ENCODE measurements at regions of chr10 and their contacts with region 1.

Region 1: DNA sequence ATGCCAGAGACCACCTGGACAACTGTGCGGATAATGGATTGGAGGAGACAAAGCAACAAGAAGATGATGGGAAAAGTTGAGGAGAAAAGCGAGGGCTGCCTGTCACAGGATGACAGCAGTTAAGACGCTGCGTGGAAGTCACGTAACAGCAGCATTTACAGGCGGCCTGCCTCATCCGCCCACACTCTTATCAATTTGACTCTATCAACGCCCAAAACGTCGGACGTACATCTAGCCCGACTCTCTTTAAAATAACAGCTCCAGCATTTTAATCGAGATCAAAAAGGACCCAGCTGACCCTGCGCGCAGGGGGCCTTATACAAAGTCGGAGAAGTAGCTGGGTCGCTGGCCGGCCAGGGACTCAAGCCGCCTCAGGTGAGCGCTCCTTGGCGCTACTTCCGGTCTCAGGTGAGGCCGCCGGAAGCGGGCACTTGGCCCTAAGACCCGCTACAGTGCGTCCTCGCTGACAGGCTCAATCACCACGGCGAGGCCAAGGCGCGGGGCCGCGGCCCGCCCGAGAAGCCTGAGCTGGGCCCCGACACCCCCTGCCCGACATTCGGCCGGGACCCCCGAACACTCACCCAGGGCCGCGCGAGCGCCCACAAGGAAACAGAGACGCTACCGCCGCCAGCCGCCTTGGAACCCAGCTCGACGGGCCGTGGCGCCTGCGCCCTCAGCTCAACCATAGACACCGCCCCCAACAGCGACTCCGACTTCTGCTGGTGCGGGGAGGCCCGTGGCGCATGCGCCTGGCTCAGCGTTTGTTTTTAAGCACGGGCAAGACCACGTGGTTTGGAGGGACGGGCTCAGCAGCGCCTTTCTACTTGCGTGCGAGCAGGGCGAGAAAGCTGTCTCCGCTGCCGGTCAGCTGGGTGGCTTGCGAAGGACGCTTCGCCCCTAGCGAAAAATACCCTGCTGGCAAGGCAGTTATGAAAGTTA is at the start of gene ERCC6:
- DNase-seq: peak; percentile 97
- H3K4me3 Mint-ChIP-seq: peak within 1 kb of the TSS; percentile 88
- H3K27ac Mint-ChIP-seq: peak within 1 kb of the TSS; percentile 98
- H3K4me1 Mint-ChIP-seq: peaks cover 38% of the 10 kb centered on the region
- H3K27me3 Mint-ChIP-seq: no peaks in the 10 kb centered on the region
- CTCF ChIP-seq: no peak
- total RNA-seq, gene ERCC6: 54.0 and 64.4 TPM in 2 replicates

Region 2: GRCh38 chr10:49518982-49519578 is 19.6 kb before region 1 on chr10:
- CTCF ChIA-PET with region 1: interaction called, 50 read pairs
- POLR2A ChIA-PET with region 1: interaction called, 10 read pairs
- intact Hi-C with region 1: no loop called
- DNase-seq: peak; percentile 60
- H3K4me3 Mint-ChIP-seq: no peak overlapping the region
- H3K27ac Mint-ChIP-seq: no peak overlapping the region
- H3K4me1 Mint-ChIP-seq: peaks cover 5% of the 10 kb centered on the region
- H3K27me3 Mint-ChIP-seq: no peaks in the 10 kb centered on the region
- CTCF ChIP-seq: peak; percentile 66

Region 3: GRCh38 chr10:49562893-49563292 is 24.2 kb after region 1 on chr10:
- CTCF ChIA-PET with region 1: interaction called, 4 read pairs
- POLR2A ChIA-PET with region 1: interaction called, 68 read pairs
- intact Hi-C with region 1: no loop called
- DNase-seq: no peak
- H3K4me3 Mint-ChIP-seq: no peak overlapping the region
- H3K27ac Mint-ChIP-seq: no peak overlapping the region
- H3K4me1 Mint-ChIP-seq: peaks cover 35% of the 10 kb centered on the region
- H3K27me3 Mint-ChIP-seq: no peaks in the 10 kb centered on the region
- CTCF ChIP-seq: no peak

Region 4: DNA sequence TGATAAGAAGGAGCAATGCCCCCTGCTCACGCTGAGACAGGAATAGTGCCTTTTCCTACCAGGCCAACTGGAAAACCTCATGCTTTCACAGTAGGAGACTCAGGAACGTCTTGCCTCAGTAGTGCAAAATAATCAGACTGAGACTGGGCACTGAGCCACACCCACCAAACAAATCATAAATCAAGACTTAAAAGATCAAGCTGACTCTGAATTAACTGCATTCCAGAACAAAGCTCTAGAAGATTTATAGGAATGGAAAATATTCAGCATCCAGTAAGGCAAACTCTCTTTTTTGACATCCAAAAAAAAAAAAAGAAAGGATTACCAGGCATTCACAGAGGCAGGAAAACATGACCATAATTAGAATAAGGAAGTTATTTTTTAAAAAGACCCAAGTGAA is 41.0 kb after region 1 on chr10:
- CTCF ChIA-PET with region 1: no interaction called
- POLR2A ChIA-PET with region 1: interaction called, 11 read pairs
- intact Hi-C with region 1: loop called (anchors 2 kb)
- DNase-seq: no peak
- H3K4me3 Mint-ChIP-seq: no peak overlapping the region
- H3K27ac Mint-ChIP-seq: no peak overlapping the region
- H3K4me1 Mint-ChIP-seq: peaks cover 30% of the 10 kb centered on the region
- H3K27me3 Mint-ChIP-seq: no peaks in the 10 kb centered on the region
- CTCF ChIP-seq: no peak

Region 5: DNA sequence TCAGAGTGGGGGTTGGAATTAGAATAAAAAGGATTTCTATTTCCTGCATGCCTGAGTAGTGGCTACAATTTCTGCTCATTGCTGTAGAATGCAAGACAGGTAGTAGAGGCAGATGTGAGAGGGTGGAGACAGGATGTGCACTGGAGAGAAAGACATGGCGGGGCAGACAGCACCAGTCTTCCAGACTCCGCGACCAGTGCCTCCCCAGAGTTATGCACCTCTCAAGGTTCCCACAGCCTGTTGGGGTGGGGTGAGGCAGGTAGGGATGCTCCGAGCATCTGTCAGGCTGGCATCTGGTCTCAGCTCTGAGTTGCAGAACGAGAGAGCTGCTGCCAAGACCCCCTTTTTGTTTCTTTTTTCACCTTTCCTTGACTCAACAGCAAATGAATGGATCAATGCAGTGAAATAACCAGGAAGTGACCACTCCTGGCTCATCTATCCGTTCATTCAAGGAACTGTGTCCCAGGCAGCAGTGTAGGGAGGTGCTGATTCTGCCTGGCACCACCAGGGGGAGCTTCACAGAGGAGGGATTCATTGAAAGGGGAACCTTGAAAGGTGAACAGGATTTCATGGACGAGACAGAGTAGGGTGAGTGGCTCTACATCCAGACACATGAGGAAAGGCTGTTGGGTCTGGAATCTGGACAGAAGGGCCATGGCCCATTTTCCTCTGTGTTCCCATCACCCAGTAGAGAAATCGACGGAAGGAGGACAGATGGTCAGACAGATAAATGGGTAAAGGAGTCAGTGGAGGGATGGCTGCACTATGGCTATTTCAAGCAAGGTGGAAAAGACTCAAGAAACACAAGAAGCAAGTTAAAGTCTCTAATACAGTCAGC is 54.3 kb after region 1 on chr10:
- CTCF ChIA-PET with region 1: interaction called, 9 read pairs
- POLR2A ChIA-PET with region 1: interaction called, 6 read pairs
- intact Hi-C with region 1: loop called (anchors 1 kb)
- DNase-seq: peak; percentile 73
- H3K4me3 Mint-ChIP-seq: no peak overlapping the region
- H3K27ac Mint-ChIP-seq: no peak overlapping the region
- H3K4me1 Mint-ChIP-seq: peaks cover 6% of the 10 kb centered on the region
- H3K27me3 Mint-ChIP-seq: no peaks in the 10 kb centered on the region
- CTCF ChIP-seq: peak; percentile 84